Left lung (tissue), 14 donors: ENCODE measurements at regions of chr20 and their contacts with region 1.

Region 1: DNA sequence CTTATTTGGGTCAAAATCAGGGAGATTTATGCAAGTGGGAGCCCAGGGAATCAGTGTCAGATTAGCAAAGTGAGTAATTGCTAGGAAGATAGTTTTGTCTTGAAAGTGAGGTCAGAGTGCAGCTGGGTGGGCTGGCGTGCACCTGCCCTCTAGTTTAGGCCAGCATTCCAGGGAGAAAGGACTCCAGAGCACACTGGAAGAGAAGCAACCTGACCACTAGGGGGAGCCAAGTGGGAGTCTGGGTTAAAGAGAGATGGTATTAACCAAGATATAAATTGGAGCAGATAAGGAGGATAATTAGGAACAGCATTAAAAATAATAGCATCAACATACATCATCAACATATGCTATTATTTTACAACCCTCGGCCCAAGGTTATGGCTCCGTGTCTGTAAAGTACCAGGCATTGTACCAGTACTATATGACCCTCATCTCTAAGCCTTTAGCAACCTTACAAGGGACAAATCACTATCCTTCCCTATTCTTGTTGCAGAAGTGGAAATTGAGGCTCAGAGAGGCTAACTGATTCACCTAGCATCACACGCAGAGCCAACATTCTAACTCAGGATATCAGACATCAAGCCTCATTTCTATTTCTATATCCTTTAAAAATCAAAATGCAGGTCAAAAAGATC is 57.8 kb downstream of the SLC2A10 start:
- DNase-seq: no peak
- ATAC-seq: peak; percentile 62
- H3K4me3 ChIP-seq: no peak overlapping the region
- H3K27ac ChIP-seq: no peak overlapping the region
- H3K4me1 ChIP-seq: no peaks in the 10 kb centered on the region
- H3K27me3 ChIP-seq: peaks cover 0 to 26% of the 10 kb centered on the region in 2 donors
- CTCF ChIP-seq: peak; percentile 38 to 64

Region 2: DNA sequence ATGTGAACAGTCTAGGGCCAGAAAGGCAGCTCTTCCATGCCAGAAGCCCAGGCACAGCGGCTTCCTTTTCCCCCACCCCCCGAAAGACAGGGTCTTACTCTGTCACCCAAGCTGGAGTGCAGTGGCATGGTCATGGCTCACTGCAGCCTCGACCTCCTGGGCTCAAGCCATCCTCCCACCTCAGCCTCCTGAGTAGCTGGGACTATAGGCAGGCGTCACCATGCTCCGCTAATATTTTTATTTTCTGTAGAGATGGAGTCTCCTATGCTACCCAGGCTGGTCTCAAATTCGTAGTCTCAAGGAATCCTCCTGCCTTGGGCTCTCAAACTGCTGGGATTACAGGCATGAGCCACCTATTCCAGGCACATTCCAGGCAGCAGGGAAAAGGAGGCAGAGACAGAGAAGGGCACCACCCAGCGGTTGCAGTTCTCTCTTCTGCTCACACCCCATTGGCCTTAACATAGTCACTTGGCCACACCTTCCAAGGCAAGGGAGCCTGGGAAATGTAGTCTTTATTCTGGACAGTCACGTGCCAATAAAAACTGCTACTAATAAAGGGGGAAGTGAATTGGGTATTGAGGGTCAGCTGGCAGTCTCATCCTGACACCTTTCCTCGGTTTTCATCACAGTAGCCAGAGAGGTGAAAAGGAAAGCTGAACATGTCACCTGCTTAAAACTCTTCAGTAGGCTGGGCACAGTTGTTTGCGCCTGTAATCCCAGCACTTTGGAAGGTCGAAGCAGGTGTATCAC is 383.3 kb after region 1 on chr20:
- intact Hi-C with region 1: loop called in 1 of 2 experiments (anchors 10 kb)
- DNase-seq: peak in 3 of 4 donors; percentile 36 to 74 (median 69)
- ATAC-seq: peak; percentile 98
- H3K4me3 ChIP-seq: no peak overlapping the region
- H3K27ac ChIP-seq: no peak overlapping the region
- H3K4me1 ChIP-seq: no peaks in the 10 kb centered on the region
- H3K27me3 ChIP-seq: no peaks in the 10 kb centered on the region
- CTCF ChIP-seq: peak; percentile 42 to 62